ENCODE measurements at regions of chr9 and their contacts with region 1.

Region 1: GRCh38 chr9:123349691-123350480 is 6.1 kb upstream of the CRB2 start:
- DNase-seq: peak; percentile 57
- ATAC-seq: peak; percentile 77
- H3K4me3 ChIP-seq: no peak overlapping the region
- H3K27ac ChIP-seq: no peak overlapping the region
- H3K4me1 ChIP-seq: no peaks in the 10 kb centered on the region
- H3K27me3 ChIP-seq: no peaks in the 10 kb centered on the region
- CTCF ChIP-seq: peak; percentile 92

Region 2: DNA sequence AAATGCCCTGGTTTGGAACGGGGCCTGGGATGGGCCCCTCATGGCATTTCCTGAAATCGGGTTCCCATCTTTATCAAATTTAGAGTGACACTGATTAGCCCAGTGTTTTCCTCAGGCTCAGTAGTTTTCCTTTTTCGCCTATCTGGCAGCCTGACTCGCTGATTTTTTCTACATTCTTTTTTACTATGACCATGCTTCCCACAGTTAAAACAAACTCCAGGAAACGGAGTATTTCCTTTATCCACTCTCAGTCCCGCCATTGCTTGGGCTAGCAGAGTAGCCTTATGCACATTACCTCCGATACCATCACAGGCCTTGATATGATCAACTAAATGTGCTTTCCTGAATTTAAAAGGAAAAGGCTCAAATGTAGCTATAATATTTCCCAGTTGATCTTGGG is 729.9 kb before region 1 on chr9:
- CTCF ChIA-PET with region 1: no interaction called
- POLR2A ChIA-PET with region 1: no interaction called
- in situ Hi-C with region 1: no loop called
- intact Hi-C with region 1: no loop called
- DNase-seq: no peak
- ATAC-seq: no peak
- H3K4me3 ChIP-seq: no peak overlapping the region
- H3K27ac ChIP-seq: no peak overlapping the region
- H3K4me1 ChIP-seq: no peaks in the 10 kb centered on the region
- H3K27me3 ChIP-seq: no peaks in the 10 kb centered on the region
- CTCF ChIP-seq: no peak

Region 3: GRCh38 chr9:123081824-123082223 is 268.1 kb before region 1 on chr9:
- CTCF ChIA-PET with region 1: interaction called, 3 read pairs
- POLR2A ChIA-PET with region 1: no interaction called
- in situ Hi-C with region 1: no loop called
- intact Hi-C with region 1: loop called (anchors 5 kb)
- DNase-seq: no peak
- ATAC-seq: peak; percentile 63; the same call in 1 of the 2 replicates
- H3K4me3 ChIP-seq: no peak overlapping the region
- H3K27ac ChIP-seq: no peak overlapping the region
- H3K4me1 ChIP-seq: no peaks in the 10 kb centered on the region
- H3K27me3 ChIP-seq: no peaks in the 10 kb centered on the region
- CTCF ChIP-seq: peak; percentile 48; the same call in 1 of the 2 replicates

Region 4: GRCh38 chr9:123262791-123263190 is 87.1 kb before region 1 on chr9:
- CTCF ChIA-PET with region 1: no interaction called
- POLR2A ChIA-PET with region 1: interaction called, 11 read pairs
- in situ Hi-C with region 1: no loop called
- intact Hi-C with region 1: no loop called
- DNase-seq: no peak
- ATAC-seq: no peak
- H3K4me3 ChIP-seq: no peak overlapping the region
- H3K27ac ChIP-seq: no peak overlapping the region
- H3K4me1 ChIP-seq: 0 out of 2 replicates have a peak, but pooled peaks cover 3% of the 10 kb centered on the region
- H3K27me3 ChIP-seq: no peaks in the 10 kb centered on the region
- CTCF ChIP-seq: no peak

Region 5: GRCh38 chr9:123387686-123388085 is 37.8 kb after region 1 on chr9:
- CTCF ChIA-PET with region 1: interaction called, 10 read pairs
- POLR2A ChIA-PET with region 1: interaction called, 12 read pairs
- in situ Hi-C with region 1: no loop called
- intact Hi-C with region 1: loop called (anchors 2 kb)
- DNase-seq: no peak
- ATAC-seq: no peak
- H3K4me3 ChIP-seq: no peak overlapping the region
- H3K27ac ChIP-seq: no peak overlapping the region
- H3K4me1 ChIP-seq: no peaks in the 10 kb centered on the region
- H3K27me3 ChIP-seq: no peaks in the 10 kb centered on the region
- CTCF ChIP-seq: no peak

Region 6: GRCh38 chr9:123445981-123446610 is 96.2 kb after region 1 on chr9:
- CTCF ChIA-PET with region 1: no interaction called
- POLR2A ChIA-PET with region 1: no interaction called
- in situ Hi-C with region 1: no loop called
- intact Hi-C with region 1: no loop called
- DNase-seq: no peak
- ATAC-seq: no peak
- H3K4me3 ChIP-seq: no peak overlapping the region
- H3K27ac ChIP-seq: no peak overlapping the region
- H3K4me1 ChIP-seq: no peaks in the 10 kb centered on the region
- H3K27me3 ChIP-seq: no peaks in the 10 kb centered on the region
- CTCF ChIP-seq: no peak

Region 7: DNA sequence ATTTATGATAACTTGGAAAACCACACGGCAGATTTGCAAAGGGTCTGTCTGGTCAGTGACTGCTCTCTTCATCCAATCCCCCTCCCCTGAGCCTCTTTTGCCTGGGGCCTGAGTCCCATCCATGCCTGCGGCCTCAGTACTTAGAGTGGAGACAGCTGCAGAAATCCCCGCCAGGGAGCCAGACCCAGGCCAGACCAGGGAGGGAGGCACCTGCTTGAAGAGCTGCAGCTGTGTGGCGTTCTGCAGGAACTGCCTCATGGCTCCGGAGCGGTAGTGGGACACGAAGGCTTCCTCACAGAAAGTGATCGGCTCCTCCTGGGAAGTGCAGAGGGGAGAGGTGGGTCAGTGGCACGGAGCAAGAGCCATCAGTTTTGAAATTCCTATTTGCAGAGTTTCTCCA is 107.7 kb after region 1 on chr9:
- CTCF ChIA-PET with region 1: no interaction called
- POLR2A ChIA-PET with region 1: no interaction called
- in situ Hi-C with region 1: no loop called
- intact Hi-C with region 1: no loop called
- DNase-seq: no peak
- ATAC-seq: no peak
- H3K4me3 ChIP-seq: no peak overlapping the region
- H3K27ac ChIP-seq: no peak overlapping the region
- H3K4me1 ChIP-seq: no peaks in the 10 kb centered on the region
- H3K27me3 ChIP-seq: no peaks in the 10 kb centered on the region
- CTCF ChIP-seq: no peak

Measured in Panc1 (cell line).